HepG2 (cell line): ENCODE measurements at regions of chr7 and their contacts with region 1.

Region 1: GRCh38 chr7:22445140-22445743 is 54.7 kb downstream of the STEAP1B start:
- DNase-seq: no peak
- ATAC-seq: no peak
- H3K4me3 ChIP-seq: no peak overlapping the region
- H3K27ac ChIP-seq: peak overlapping the region; percentile 96
- H3K4me1 ChIP-seq: peaks cover 62% of the 10 kb centered on the region
- H3K27me3 ChIP-seq: no peaks in the 10 kb centered on the region
- CTCF ChIP-seq: no peak
- EP300 ChIP-seq: no peak
- POLR2A ChIP-seq: no peak
- RAD21 ChIP-seq: no peak

Region 2: DNA sequence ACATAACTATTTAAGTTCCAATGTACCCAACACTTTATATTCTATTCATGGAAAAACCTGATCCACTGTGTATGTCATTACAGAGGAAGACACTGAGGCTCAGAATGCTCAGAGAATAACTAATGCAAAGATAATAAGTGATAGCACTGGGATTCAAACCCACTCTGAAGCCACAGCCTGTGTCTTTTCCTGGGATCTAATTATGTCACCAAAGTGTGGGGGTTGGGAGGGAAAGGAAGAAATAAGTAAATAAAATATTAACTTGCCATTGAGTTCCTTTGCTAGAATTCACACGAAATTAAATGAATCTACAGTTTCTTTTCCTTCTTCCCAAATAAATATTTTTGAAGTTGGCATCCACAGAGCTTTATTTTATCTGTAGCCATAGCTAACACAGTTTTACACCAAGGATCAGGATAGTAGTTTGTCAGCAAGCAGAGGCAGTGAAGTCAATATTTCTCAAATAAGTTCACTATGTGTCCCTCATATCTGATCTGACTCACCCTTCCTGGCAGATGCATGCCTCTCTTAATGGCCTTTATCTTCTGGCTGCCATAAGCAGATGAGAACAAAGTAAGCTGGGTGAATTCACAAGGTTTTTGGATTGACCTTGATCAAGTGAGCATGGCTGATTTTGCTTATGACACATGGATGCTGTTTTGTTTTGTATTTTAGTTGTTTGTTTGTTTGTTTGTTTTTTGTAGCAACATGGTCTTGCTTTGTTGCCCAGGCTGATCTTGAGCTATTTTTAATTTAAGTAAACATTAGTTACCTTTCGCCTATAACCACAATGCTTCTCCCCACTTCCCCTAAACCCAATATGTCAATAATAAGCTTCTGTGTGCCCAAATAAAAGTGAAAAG is 94.5 kb before region 1 on chr7:
- CTCF ChIA-PET with region 1: no interaction called
- POLR2A ChIA-PET with region 1: interaction called, 85 read pairs
- in situ Hi-C with region 1: loop called (anchors 5 kb)
- intact Hi-C with region 1: no loop called
- DNase-seq: peak; percentile 90
- ATAC-seq: peak; percentile 88
- H3K4me3 ChIP-seq: peak overlapping the region in 2 of 3 experiments; percentile 14 to 39; a peak in 2 of 6 replicates
- H3K27ac ChIP-seq: peak overlapping the region; percentile 69
- H3K4me1 ChIP-seq: peaks cover 100% of the 10 kb centered on the region
- H3K27me3 ChIP-seq: no peaks in the 10 kb centered on the region
- CTCF ChIP-seq: no peak
- EP300 ChIP-seq: 0 out of 4 replicates have a peak, but pooled peaks of 1 of the 2 experiments have one; percentile 51
- POLR2A ChIP-seq: no peak
- RAD21 ChIP-seq: no peak

Region 3: GRCh38 chr7:22356701-22357353 is 88.4 kb before region 1 on chr7 and contains the start of gene RAPGEF5:
- CTCF ChIA-PET with region 1: no interaction called
- POLR2A ChIA-PET with region 1: interaction called, 85 read pairs
- in situ Hi-C with region 1: loop called (anchors 5 kb)
- intact Hi-C with region 1: loop called (anchors 1 kb)
- DNase-seq: no peak
- ATAC-seq: peak; percentile 44
- H3K4me3 ChIP-seq: peak within 1 kb of the TSS; percentile 85 to 93 (median 88)
- H3K27ac ChIP-seq: peak within 1 kb of the TSS; percentile 95
- H3K4me1 ChIP-seq: peaks cover 85% of the 10 kb centered on the region
- H3K27me3 ChIP-seq: peaks cover 0 to 3% of the 10 kb centered on the region in 2 experiments; a peak in 1 of 5 replicates
- CTCF ChIP-seq: no peak
- EP300 ChIP-seq: no peak
- POLR2A ChIP-seq: peak in 1 of 2 experiments; percentile 54; a peak in 2 of 4 replicates
- RAD21 ChIP-seq: peak; percentile 43; the same call in 1 of the 2 replicates
- total RNA-seq, gene RAPGEF5: 14.2 and 23.4 TPM in 2 replicates

Region 4: GRCh38 chr7:22377703-22378102 is 67.5 kb before region 1 on chr7:
- CTCF ChIA-PET with region 1: no interaction called
- POLR2A ChIA-PET with region 1: interaction called, 3 read pairs
- in situ Hi-C with region 1: no loop called
- intact Hi-C with region 1: loop called (anchors 2 kb)
- DNase-seq: no peak
- ATAC-seq: peak; percentile 47
- H3K4me3 ChIP-seq: peak overlapping the region in 1 of 3 experiments; percentile 46; a peak in 1 of 6 replicates
- H3K27ac ChIP-seq: peak overlapping the region; percentile 81
- H3K4me1 ChIP-seq: peaks cover 59% of the 10 kb centered on the region
- H3K27me3 ChIP-seq: no peaks in the 10 kb centered on the region
- CTCF ChIP-seq: no peak
- EP300 ChIP-seq: no peak
- POLR2A ChIP-seq: no peak
- RAD21 ChIP-seq: no peak

Region 5: DNA sequence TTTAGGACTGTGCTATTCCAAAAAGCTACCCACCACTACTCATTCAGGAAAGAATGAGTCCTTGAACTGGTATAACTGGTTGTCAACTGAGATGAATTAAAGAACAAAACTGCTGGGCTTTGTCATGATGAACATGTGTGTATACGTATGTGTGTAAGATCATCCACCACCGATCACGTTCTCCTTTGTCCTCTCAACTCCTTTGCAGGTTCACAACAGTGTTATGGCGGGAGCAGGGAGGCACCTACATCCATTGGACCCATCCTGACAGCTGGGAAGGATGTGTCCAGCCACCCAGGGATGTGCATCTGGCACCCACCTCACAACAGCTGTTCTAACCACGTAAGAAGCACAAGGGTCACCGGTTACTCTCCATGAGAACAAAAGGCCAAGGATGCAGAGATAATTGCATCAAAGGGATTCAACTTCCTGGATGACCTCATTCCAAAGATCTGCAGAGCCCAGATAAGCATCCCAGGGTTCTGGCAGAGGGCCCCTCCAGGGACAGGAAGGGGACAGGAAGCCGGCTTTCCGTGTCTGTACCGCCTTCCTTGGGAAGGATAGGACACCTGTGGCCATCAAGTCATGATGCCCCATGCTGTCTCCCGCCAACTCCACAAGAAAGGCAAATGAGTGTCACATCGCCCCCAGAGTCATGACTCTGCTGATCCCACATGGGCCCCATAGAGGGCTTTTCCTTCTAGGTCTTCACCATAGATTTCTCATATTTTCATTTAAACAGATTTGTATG is 11.4 kb before region 1 on chr7:
- CTCF ChIA-PET with region 1: no interaction called
- POLR2A ChIA-PET with region 1: interaction called, 7 read pairs
- in situ Hi-C with region 1: no loop called
- intact Hi-C with region 1: loop called (anchors 1 kb)
- DNase-seq: peak; percentile 93
- ATAC-seq: peak; percentile 88
- H3K4me3 ChIP-seq: no peak overlapping the region
- H3K27ac ChIP-seq: peak overlapping the region; percentile 53
- H3K4me1 ChIP-seq: peaks cover 57% of the 10 kb centered on the region
- H3K27me3 ChIP-seq: no peaks in the 10 kb centered on the region
- CTCF ChIP-seq: peak; percentile 30
- EP300 ChIP-seq: peak in 1 of 2 experiments; percentile 86; a peak in 2 of 4 replicates
- POLR2A ChIP-seq: no peak
- RAD21 ChIP-seq: no peak

Region 6: DNA sequence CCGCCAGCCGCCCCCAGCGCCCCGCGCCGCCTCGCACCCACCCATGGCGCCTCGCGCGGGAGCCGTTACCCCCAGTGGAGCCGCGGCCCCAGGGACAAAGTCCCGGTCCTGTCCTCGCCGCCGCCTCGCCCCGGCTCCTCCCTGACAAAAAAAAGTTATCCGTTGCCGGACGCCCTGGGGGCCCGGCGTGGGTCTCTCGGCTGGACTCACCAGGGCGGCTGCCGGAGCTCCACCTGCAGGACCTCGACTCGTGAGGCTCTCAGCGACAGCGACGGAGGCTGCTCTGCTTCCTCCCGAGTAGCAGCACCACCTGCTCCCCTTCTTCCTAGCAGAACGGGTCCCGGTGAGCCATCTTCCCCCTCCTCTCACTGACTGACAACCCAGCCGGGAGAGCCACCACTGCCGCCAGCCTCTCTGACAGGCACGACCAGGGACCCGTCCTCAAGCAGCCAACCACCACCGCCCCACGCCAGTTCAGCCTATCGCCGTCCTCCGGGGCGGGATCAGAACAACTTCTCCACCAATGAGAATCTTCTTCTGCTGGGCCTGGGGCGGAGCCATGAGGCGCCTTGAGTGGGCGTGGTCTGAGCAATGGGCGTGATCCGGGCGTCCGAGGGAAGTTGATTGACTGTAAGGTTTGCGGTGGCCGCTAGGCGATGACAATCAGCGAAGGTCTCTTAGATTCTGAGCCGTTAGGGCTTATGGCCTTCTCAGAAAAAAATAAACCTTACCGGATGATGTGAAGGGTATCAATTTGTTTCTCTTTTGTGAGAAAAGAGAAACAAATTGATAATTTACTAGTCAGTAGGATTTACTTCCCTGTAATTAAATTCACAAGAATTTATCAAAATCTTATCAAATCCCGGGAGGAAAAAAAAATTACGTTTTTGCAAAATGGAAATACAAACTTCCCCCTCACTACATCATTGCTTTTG is 568.7 kb after region 1 on chr7 and contains the start of gene HYCC1:
- CTCF ChIA-PET with region 1: no interaction called
- POLR2A ChIA-PET with region 1: no interaction called
- in situ Hi-C with region 1: no loop called
- intact Hi-C with region 1: loop called (anchors 5 kb)
- DNase-seq: peak; percentile 96
- ATAC-seq: peak; percentile 98
- H3K4me3 ChIP-seq: peak within 1 kb of the TSS; percentile 88 to 91 (median 88)
- H3K27ac ChIP-seq: peak within 1 kb of the TSS; percentile 70
- H3K4me1 ChIP-seq: peaks cover 65% of the 10 kb centered on the region
- H3K27me3 ChIP-seq: no peaks in the 10 kb centered on the region
- CTCF ChIP-seq: peak; percentile 64
- EP300 ChIP-seq: no peak
- POLR2A ChIP-seq: peak; percentile 96 to 99
- RAD21 ChIP-seq: no peak
- total RNA-seq, gene HYCC1: 41.8 and 52.2 TPM in 2 replicates